Common myeloid progenitor, CD34-positive (primary cell): ENCODE measurements at regions of chr7 and their contacts with region 1.

Region 1: GRCh38 chr7:155598810-155599210 is 45.7 kb upstream of the RBM33 start:
- DNase-seq: peak; percentile 66 to 85 (median 77)
- H3K4me3 ChIP-seq: no peak overlapping the region
- H3K27ac ChIP-seq: no peak overlapping the region
- H3K4me1 ChIP-seq: peaks cover 1 to 16% (median 3%) of the 10 kb centered on the region in 4 experiments
- H3K27me3 ChIP-seq: peaks cover 0 to 8% (median 4%) of the 10 kb centered on the region in 5 experiments

Region 2: GRCh38 chr7:155509725-155510551 is 88.9 kb before region 1 on chr7:
- CTCF ChIA-PET with region 1: no interaction called
- POLR2A ChIA-PET with region 1: no interaction called
- DNase-seq: peak in 2 of 3 donors; percentile 38
- H3K4me3 ChIP-seq: peak overlapping the region in 3 of 7 experiments; percentile 19 to 53 (median 28)
- H3K27ac ChIP-seq: no peak overlapping the region
- H3K4me1 ChIP-seq: peaks cover 0 to 11% (median 6%) of the 10 kb centered on the region in 4 experiments
- H3K27me3 ChIP-seq: peaks cover 48 to 98% (median 64%) of the 10 kb centered on the region in 5 experiments

Region 3: DNA sequence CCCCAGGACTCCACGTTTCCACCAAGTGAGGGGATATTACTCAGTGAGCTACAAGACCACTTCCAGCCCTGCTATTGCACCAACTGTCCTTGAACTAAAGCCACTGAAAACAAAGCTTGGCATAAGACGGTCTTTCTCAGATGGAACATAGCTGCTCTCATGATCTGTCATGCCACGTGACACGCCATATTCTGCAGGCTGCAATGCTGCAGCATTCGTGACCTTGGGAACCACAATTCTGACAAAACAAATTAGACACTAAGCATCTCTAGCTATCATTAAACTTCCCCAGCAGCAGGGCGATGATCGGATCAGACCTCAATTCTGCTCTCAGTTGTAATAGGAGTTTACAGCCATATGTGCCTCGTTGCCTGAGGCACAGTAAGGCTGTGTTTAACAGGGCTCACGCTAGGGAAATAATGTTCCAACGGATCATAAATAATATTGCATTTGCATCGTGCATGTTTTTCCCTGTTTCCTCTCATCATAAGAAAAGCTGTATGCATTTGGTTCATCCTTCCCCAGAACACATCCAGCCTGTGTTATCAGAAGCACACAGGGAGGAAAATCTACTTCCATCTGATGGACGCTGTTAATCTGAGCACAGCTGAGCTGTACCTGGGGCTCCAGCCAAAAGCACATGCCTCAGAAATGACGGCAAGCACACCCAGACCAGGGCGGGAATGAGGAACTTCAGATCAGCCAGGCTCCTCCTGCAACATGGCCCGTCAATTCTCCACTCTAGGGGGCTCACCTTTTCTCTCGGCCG is 13.9 kb before region 1 on chr7:
- CTCF ChIA-PET with region 1: interaction called, 26 read pairs
- POLR2A ChIA-PET with region 1: no interaction called
- DNase-seq: peak; percentile 41 to 76 (median 69)
- H3K4me3 ChIP-seq: peak overlapping the region in 1 of 7 experiments; percentile 32
- H3K27ac ChIP-seq: no peak overlapping the region
- H3K4me1 ChIP-seq: peaks cover 0 to 15% (median 2%) of the 10 kb centered on the region in 4 experiments
- H3K27me3 ChIP-seq: peaks cover 0 to 12% (median 0%) of the 10 kb centered on the region in 5 experiments

Region 4: GRCh38 chr7:155665957-155666287 is 67.1 kb after region 1 on chr7:
- CTCF ChIA-PET with region 1: interaction called, 11 read pairs
- POLR2A ChIA-PET with region 1: no interaction called
- DNase-seq: no peak
- H3K4me3 ChIP-seq: no peak overlapping the region
- H3K27ac ChIP-seq: no peak overlapping the region
- H3K4me1 ChIP-seq: peaks cover 0 to 22% (median 18%) of the 10 kb centered on the region in 4 experiments
- H3K27me3 ChIP-seq: no peaks in the 10 kb centered on the region

Region 5: DNA sequence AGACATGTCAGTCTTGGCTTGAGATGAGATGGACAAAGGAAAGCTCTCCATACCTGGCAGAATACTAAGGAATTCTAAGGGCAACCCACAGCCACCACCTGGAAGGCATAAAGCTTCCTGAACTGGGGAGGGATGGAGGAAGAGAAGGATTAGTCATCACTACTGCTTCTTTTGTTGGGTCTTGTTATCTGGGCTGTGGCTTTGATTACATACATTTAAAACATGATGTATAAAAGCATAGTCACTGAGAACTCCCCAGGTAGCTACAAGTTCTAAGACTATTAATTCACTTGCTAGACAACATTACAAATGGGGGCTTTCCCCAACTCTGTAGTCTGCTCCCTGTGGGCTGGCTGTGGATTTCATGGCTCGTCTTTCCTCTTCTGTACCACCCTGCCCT is 103.8 kb after region 1 on chr7:
- CTCF ChIA-PET with region 1: interaction called, 11 read pairs
- POLR2A ChIA-PET with region 1: no interaction called
- DNase-seq: no peak
- H3K4me3 ChIP-seq: no peak overlapping the region
- H3K27ac ChIP-seq: no peak overlapping the region
- H3K4me1 ChIP-seq: no peaks in the 10 kb centered on the region
- H3K27me3 ChIP-seq: no peaks in the 10 kb centered on the region

Region 6: DNA sequence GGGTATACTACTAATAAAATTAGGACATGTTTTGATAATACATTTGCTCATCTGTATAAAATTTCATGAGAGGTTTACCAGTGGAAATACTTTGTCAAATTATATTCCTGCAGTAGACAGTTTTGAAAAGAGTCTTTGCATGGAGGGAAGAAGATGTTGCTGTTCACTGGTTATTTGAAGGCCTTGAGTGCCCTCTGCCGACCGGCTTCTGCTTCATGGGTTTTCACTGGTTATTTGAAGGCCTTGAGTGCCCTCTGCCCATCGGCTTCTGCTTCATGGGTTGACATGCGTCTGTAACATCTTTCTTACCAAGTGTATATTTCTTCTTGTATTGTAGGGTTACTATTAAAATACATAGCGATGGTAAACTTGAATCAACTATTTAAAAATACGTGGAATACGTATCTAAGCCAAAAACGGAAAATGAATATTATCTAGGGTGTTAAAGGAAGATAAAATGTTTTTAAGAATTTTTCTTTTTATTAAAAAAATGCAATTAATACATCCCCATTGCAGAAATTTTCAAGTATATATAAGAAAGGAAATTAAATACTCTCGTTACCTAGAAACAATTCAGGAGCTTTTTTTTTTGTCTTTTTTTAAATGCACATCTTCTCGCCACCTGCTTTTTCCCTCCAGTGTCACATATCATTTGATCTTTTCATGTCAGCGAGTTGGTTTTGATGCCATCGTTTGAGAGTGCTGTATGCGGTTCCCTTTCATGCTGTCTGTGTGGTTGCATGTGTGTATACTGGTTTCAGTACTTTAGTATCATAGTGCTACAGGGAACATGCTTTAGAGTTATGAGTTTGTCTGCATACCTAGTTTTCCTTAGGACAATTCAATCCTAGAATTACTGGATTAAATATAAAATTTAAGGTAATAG is 140.1 kb after region 1 on chr7:
- CTCF ChIA-PET with region 1: interaction called, 19 read pairs
- POLR2A ChIA-PET with region 1: no interaction called
- DNase-seq: peak; percentile 73 to 86 (median 85)
- H3K4me3 ChIP-seq: no peak overlapping the region
- H3K27ac ChIP-seq: no peak overlapping the region
- H3K4me1 ChIP-seq: peaks cover 0 to 4% (median 1%) of the 10 kb centered on the region in 4 experiments
- H3K27me3 ChIP-seq: no peaks in the 10 kb centered on the region

Region 7: GRCh38 chr7:155769701-155770100 is 170.9 kb after region 1 on chr7:
- CTCF ChIA-PET with region 1: interaction called, 137 read pairs
- POLR2A ChIA-PET with region 1: interaction called, 3 read pairs
- DNase-seq: no peak
- H3K4me3 ChIP-seq: no peak overlapping the region
- H3K27ac ChIP-seq: no peak overlapping the region
- H3K4me1 ChIP-seq: peaks cover 0 to 12% (median 3%) of the 10 kb centered on the region in 4 experiments
- H3K27me3 ChIP-seq: no peaks in the 10 kb centered on the region